A673 (cell line): ENCODE measurements at regions of chr6 and their contacts with region 1.

Region 1: DNA sequence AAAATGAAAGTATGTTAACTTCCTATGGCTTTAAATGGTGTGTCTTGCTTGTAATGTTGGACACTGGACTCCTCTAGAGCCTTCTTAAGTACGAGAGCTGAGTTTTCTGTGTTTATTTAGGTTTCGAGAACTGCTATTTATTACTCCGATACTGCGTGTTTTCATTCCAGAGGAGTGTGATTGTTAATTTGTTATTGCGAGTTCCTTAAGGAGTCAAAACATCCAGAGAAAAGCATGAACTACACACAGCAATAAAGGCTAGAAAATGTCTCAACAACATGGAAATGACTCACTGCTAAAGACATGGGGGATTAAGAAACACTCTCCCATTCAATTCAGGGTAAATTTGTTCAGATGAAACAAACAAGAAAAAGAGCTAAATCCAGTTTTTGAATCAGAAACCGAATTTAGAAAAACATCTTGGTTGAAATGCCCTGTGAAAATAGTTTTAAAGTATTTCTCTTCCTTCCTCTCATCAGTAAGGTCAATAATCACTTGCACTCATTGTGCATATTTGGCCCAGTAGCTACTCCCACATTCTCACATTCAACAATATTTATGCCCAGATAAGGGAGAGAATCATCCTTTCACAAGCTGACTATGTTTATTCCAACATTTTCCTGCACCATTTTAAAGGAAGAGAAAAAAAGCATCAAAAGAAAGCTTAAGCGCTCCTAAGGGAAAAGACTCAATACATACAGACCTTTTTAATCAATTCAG is 36.0 kb downstream of the ATXN1 start:
- DNase-seq: peak; percentile 69
- H3K4me3 ChIP-seq: no peak overlapping the region
- H3K27ac ChIP-seq: peak overlapping the region; percentile 70
- H3K4me1 ChIP-seq: peaks cover 73% of the 10 kb centered on the region
- H3K27me3 ChIP-seq: no peaks in the 10 kb centered on the region
- CTCF ChIP-seq: no peak

Region 2: DNA sequence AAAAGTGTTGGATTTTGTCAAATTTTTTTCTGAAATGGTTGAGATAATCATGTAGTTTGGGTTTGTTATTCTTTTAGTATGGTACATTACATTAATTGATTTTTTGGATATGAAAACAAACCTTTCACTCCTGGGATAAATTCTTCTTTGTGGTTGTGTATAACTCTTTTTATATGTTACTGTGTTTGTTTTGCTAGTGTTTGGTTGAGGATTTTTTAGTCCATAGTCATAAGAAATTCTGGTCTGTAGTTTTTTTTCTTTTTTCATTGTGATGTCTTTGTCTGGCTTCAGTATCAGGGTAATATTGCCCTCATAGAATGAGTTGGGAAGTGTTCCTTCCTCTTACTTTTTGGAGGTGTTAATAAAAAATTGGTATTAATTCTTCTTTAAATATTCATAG is 158.1 kb after region 1 on chr6:
- CTCF ChIA-PET with region 1: no interaction called
- POLR2A ChIA-PET with region 1: no interaction called
- intact Hi-C with region 1: no loop called
- DNase-seq: no peak
- H3K4me3 ChIP-seq: no peak overlapping the region
- H3K27ac ChIP-seq: no peak overlapping the region
- H3K4me1 ChIP-seq: no peaks in the 10 kb centered on the region
- H3K27me3 ChIP-seq: no peaks in the 10 kb centered on the region
- CTCF ChIP-seq: no peak

Region 3: DNA sequence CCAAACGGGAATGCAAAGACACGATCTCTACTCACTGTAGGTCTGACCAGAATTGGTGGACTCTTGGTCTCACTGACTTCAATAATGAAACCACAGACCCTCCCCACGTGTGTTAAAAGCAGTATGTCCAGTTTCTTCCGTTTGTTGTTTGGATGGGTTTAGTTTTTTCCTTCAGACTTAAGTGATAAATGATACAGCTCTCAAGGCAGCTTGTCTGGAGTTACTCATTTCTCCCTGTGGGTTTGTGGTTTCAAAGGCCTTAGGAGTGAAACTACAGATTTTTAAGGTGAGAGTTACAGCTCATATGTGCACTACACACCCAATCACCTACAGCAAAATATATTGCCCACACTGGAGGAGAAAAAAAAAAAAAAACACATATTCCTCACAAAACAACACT is 289.8 kb after region 1 on chr6:
- CTCF ChIA-PET with region 1: no interaction called
- POLR2A ChIA-PET with region 1: interaction called, 12 read pairs
- intact Hi-C with region 1: no loop called
- DNase-seq: no peak
- H3K4me3 ChIP-seq: no peak overlapping the region
- H3K27ac ChIP-seq: no peak overlapping the region
- H3K4me1 ChIP-seq: no peaks in the 10 kb centered on the region
- H3K27me3 ChIP-seq: no peaks in the 10 kb centered on the region
- CTCF ChIP-seq: no peak